Right ventricle myocardium inferior (tissue), 1 donor: ENCODE measurements at regions of chr4 and their contacts with region 1.

Region 1: DNA sequence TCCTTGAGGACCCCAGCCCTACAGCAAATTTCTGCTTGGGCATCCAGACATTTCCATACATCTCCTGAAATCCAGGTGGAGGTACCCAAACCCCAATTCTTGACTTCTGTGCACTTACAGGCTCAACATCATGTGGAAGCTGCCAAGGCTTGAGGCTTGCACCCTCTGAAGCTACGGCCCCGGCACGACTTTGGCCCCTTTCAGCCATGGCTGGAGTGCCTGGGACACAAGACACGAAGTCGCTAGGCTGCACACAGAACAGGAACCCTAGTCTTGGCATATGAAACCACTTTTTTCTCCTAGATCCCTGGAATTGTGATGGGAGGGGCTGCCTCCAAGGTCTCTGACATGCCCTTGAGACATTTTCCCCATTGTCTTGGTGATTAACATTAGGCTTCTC is 1417.7 kb downstream of the ARAP2 start:
- DNase-seq: no peak
- ATAC-seq: no peak

Region 2: GRCh38 chr4:34709564-34709963 is 117.1 kb before region 1 on chr4:
- intact Hi-C with region 1: no loop called
- DNase-seq: no peak
- ATAC-seq: no peak

Region 3: GRCh38 chr4:34771632-34772031 is 55.0 kb before region 1 on chr4:
- intact Hi-C with region 1: loop called (anchors 2 kb)
- DNase-seq: no peak
- ATAC-seq: no peak

Region 4: DNA sequence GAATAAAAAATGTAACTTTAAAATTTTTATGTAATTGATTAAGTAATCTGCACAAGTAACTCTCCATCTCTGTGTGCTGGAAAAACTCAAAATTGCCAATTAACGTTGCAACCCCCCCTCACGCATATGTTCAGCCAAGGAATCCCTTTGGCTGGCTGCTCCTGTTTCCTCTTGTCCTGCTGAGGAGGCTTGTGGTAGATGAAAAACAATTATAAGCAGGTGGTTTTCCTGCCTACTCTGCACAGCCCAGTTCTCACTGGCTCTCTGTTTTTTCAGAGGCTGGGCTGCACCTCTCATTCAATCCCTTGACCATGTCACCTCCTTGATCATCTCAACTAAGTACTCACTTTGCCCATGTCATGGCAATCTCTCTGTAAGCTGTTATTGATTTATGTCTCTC is 349.2 kb after region 1 on chr4:
- intact Hi-C with region 1: no loop called
- DNase-seq: no peak
- ATAC-seq: no peak